HCT116 (cell line): ENCODE measurements at regions of chr22 and their contacts with region 1.

Region 1: GRCh38 chr22:25465949-25466348 is 98.5 kb upstream of the GRK3 start:
- DNase-seq: no peak
- ATAC-seq: no peak
- H3K4me3 ChIP-seq: no peak overlapping the region
- H3K27ac ChIP-seq: no peak overlapping the region
- H3K4me1 ChIP-seq: no peaks in the 10 kb centered on the region
- H3K27me3 ChIP-seq: no peaks in the 10 kb centered on the region
- CTCF ChIP-seq: no peak
- POLR2A ChIP-seq: no peak
- RAD21 ChIP-seq: no peak

Region 2: DNA sequence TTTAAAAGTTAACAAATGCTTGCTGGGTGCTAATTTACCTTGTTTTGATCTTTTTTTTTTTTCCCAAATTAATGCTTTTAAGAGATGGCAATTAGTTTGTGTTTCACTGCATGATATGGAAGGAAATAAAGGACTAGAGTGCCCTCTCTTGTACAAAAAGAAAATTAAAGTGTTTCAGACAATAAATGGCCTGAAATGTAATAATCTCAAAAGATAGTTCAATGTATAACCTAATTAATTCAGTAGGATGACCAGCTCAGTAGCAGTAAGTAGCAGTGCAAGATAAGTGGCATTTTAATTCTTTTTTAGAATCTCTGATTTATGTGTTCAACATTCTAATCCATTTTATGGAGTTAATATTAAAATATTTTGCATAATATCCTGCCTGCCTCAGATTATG is 236.1 kb after region 1 on chr22:
- CTCF ChIA-PET with region 1: interaction called, 14 read pairs
- POLR2A ChIA-PET with region 1: no interaction called
- RAD21 ChIA-PET with region 1: no interaction called
- intact Hi-C with region 1: loop called (anchors 1 kb)
- DNase-seq: no peak
- ATAC-seq: no peak
- H3K4me3 ChIP-seq: no peak overlapping the region
- H3K27ac ChIP-seq: no peak overlapping the region
- H3K4me1 ChIP-seq: no peaks in the 10 kb centered on the region
- H3K27me3 ChIP-seq: no peaks in the 10 kb centered on the region
- CTCF ChIP-seq: peak; percentile 11 to 55 (median 40); a peak in 4 of 6 replicates
- POLR2A ChIP-seq: no peak
- RAD21 ChIP-seq: peak; percentile 59

Region 3: DNA sequence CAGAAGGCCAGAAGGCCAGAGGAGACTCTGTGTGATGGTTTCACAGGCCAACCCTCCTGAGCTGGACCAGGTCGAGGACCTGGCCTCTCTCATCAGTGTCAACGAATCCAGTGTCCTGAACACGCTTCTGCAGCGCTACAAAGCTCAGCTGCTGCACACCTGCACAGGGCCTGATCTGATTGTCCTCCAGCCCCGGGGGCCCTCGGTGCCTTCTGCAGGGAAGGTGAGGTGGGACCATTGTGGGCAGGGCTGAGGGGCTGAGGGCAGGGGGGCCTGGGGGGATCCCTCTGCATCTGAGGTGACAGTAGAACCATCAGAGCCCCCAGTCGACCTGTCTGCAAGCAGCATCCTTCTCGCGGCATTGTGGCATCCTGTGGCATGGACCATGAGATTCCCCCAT is 306.3 kb after region 1 on chr22:
- CTCF ChIA-PET with region 1: interaction called, 42 read pairs
- POLR2A ChIA-PET with region 1: interaction called, 3 read pairs
- RAD21 ChIA-PET with region 1: interaction called, 4 to 6 read pairs
- intact Hi-C with region 1: loop called (anchors 1 kb)
- DNase-seq: no peak
- ATAC-seq: no peak
- H3K4me3 ChIP-seq: no peak overlapping the region
- H3K27ac ChIP-seq: no peak overlapping the region
- H3K4me1 ChIP-seq: no peaks in the 10 kb centered on the region
- H3K27me3 ChIP-seq: no peaks in the 10 kb centered on the region
- CTCF ChIP-seq: no peak
- POLR2A ChIP-seq: no peak
- RAD21 ChIP-seq: no peak

Region 4: DNA sequence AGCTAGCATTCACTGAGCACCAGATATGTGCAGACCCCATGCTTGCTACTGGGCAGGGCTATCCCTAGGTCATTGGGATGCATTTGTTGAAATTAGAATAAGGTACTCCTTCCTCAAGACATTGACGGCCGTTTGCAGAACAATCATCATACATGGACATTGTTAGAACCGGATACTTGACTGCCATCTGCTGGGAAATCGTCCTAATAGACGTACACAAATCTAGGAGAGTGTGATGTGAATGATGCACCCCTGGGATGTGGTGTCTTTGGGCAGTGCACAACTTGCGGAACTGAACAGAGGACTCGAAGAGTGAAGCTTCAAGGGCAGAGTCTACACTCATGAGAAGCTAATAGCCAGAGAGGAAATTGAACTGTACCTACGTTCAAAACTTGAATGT is 311.9 kb after region 1 on chr22:
- CTCF ChIA-PET with region 1: interaction called, 42 read pairs
- POLR2A ChIA-PET with region 1: no interaction called
- RAD21 ChIA-PET with region 1: interaction called, 4 to 6 read pairs
- intact Hi-C with region 1: loop called (anchors 1 kb)
- DNase-seq: peak; percentile 44
- ATAC-seq: peak; percentile 88
- H3K4me3 ChIP-seq: no peak overlapping the region
- H3K27ac ChIP-seq: no peak overlapping the region
- H3K4me1 ChIP-seq: no peaks in the 10 kb centered on the region
- H3K27me3 ChIP-seq: no peaks in the 10 kb centered on the region
- CTCF ChIP-seq: peak; percentile 32 to 62 (median 53); a peak in 5 of 6 replicates
- POLR2A ChIP-seq: no peak
- RAD21 ChIP-seq: peak; percentile 47; the same call in 1 of the 2 replicates